ENCODE measurements at regions of chr4 and their contacts with region 1.

Region 1: GRCh38 chr4:74598611-74599290 is 153.8 kb downstream of the AREG start:
- DNase-seq: no peak
- ATAC-seq: no peak
- H3K4me3 ChIP-seq: no peak overlapping the region
- H3K27ac ChIP-seq: no peak overlapping the region
- H3K4me1 ChIP-seq: no peaks in the 10 kb centered on the region
- H3K27me3 ChIP-seq: no peaks in the 10 kb centered on the region
- CTCF ChIP-seq: no peak

Region 2: DNA sequence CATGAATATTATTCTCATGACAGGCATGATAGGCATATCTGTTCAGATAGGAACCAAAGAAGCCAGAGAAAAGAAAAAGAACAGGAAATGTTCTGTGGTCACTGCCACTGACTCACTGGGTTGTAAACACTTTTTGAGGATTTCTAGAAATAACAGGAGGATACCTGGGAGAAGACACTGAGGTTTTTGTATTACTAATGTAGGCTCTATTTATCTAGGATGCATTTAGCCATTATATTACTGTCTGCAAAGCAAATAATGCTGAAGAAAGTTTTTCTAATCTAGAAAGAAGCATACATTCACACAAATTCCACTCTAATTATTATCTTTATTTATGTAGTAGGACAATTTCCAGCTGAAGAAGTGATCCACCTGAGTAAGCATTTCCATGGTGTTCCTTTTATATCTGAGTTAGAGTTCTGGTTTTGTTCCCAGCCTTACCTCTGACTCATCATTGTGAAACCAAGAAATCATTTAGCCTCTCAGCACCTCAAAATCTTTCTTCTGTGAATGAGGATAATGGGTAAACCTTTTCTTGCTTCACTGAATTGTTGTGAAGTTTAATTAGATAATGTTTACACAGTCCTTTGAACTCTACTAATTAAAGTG is 330.6 kb before region 1 on chr4:
- intact Hi-C with region 1: no loop called
- DNase-seq: no peak
- ATAC-seq: no peak
- H3K4me3 ChIP-seq: no peak overlapping the region
- H3K27ac ChIP-seq: no peak overlapping the region
- H3K4me1 ChIP-seq: no peaks in the 10 kb centered on the region
- H3K27me3 ChIP-seq: no peaks in the 10 kb centered on the region
- CTCF ChIP-seq: no peak

Region 3: GRCh38 chr4:74444891-74445642 is 153.7 kb before region 1 on chr4 and contains the start of gene AREG:
- intact Hi-C with region 1: no loop called
- DNase-seq: peak; percentile 95
- ATAC-seq: peak; percentile 97
- H3K4me3 ChIP-seq: peak within 1 kb of the TSS; percentile 65
- H3K27ac ChIP-seq: peak within 1 kb of the TSS; percentile 90
- H3K4me1 ChIP-seq: no peaks in the 10 kb centered on the region
- H3K27me3 ChIP-seq: no peaks in the 10 kb centered on the region
- CTCF ChIP-seq: peak; percentile 55
- total RNA-seq, gene AREG: 14.6 TPM

Region 4: GRCh38 chr4:74733756-74734155 is 135.0 kb after region 1 on chr4:
- intact Hi-C with region 1: loop called (anchors 5 kb)
- DNase-seq: no peak
- ATAC-seq: no peak
- H3K4me3 ChIP-seq: no peak overlapping the region
- H3K27ac ChIP-seq: no peak overlapping the region
- H3K4me1 ChIP-seq: no peaks in the 10 kb centered on the region
- H3K27me3 ChIP-seq: no peaks in the 10 kb centered on the region
- CTCF ChIP-seq: no peak

Region 5: DNA sequence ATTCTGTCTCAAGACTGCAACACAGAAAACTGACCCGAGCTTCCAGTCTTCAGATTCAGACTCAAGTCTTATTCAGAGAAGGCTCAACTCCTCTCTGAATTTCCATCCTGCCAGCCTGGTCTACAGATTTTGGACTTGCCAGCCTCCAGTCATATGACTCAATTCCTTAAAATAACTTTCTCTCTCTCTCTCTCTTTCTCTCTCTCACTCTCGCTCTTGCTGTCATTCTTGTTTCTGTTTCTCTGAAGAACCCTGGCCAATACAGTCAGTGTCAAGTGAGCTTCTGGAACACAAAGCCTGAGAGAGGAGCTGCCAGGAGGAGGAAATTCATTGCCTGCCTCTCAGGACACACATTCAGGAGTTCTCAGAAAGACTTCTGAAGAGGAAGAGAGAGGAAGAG is 489.1 kb after region 1 on chr4:
- intact Hi-C with region 1: no loop called
- DNase-seq: no peak
- ATAC-seq: no peak
- H3K4me3 ChIP-seq: no peak overlapping the region
- H3K27ac ChIP-seq: no peak overlapping the region
- H3K4me1 ChIP-seq: no peaks in the 10 kb centered on the region
- H3K27me3 ChIP-seq: no peaks in the 10 kb centered on the region
- CTCF ChIP-seq: no peak

Measured in upper lobe of right lung (tissue), 1 donor.